CD8-positive, alpha-beta T cell (primary cell): ENCODE measurements at regions of chr16 and their contacts with region 1.

Region 1: DNA sequence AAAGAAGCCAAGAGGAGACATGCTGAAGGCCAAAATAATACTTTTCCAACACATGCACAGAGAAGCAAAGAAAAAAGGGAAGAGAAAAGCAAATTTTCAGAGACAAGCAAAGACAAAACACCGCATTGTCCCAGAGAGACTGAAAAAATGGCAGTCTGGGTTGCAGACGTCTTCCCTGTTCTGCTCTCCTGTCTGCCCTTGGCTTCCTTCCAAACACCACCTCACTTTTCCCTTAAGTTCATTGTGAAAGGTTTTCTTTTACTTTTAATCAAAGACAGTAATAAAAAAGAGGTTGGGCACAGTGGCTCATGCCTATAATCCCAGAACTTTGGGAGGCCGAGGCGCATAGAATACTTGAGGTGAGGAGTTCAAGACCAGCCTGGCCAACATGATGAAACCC is 21.2 kb upstream of the VAT1L start:
- DNase-seq: no peak
- ATAC-seq: no peak
- H3K4me3 ChIP-seq: no peak overlapping the region
- H3K4me3 Mint-ChIP-seq: no peak overlapping the region
- H3K27ac ChIP-seq: no peak overlapping the region
- H3K27ac Mint-ChIP-seq: no peak overlapping the region
- H3K4me1 ChIP-seq: no peaks in the 10 kb centered on the region
- H3K4me1 Mint-ChIP-seq: no peaks in the 10 kb centered on the region
- H3K27me3 ChIP-seq: no peaks in the 10 kb centered on the region
- H3K27me3 Mint-ChIP-seq: peaks cover 14% of the 10 kb centered on the region
- CTCF ChIP-seq: no peak

Region 2: GRCh38 chr16:77715145-77715544 is 52.1 kb before region 1 on chr16:
- CTCF ChIA-PET with region 1: no interaction called
- POLR2A ChIA-PET with region 1: no interaction called
- intact Hi-C with region 1: loop called in 1 of 2 experiments (anchors 5 kb)
- DNase-seq: no peak
- ATAC-seq: no peak
- H3K4me3 ChIP-seq: no peak overlapping the region
- H3K4me3 Mint-ChIP-seq: no peak overlapping the region
- H3K27ac ChIP-seq: no peak overlapping the region
- H3K27ac Mint-ChIP-seq: no peak overlapping the region
- H3K4me1 ChIP-seq: no peaks in the 10 kb centered on the region
- H3K4me1 Mint-ChIP-seq: no peaks in the 10 kb centered on the region
- H3K27me3 ChIP-seq: no peaks in the 10 kb centered on the region
- H3K27me3 Mint-ChIP-seq: peaks cover 2% of the 10 kb centered on the region
- CTCF ChIP-seq: no peak